Cardiac septum (tissue), 1 donor: ENCODE measurements at regions of chr18 and their contacts with region 1.

Region 1: DNA sequence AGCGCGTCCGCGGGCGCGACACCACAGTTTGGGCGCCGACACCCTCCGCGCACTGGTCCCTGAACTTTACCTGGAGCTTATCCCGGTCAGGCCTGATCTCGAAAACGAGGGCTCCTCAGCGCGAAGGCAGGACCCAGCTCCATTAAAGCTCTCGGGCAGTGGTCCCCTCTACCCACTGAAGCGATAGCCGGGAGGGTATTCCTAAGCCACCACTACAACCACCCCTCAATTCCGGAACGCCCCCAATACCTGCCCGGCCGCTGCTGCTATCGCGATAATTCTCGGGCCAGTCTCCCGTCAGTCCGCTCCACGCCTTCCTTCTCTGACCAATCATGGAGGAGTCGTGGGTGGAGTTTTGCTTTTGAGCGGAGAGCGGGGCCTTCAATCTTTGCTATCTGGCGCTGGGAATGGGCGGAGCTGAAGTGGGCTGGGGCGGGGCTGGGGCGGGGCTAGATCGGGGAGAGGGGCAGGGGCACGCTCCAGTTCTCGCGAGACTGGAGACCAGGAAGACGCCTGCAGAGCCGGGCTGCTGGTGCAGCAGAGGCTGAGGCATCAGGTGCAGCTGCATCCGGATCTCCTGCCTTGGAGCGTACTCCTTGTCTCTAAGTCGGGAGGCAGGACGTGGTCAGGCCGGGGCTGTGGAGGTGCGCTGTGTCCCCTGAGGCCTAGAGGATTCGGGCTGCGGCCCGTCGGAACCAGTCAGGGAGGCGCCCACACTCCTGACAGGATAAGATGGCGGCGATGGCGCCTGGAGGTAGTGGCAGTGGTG is at the starts of genes PIGN and RELCH:
- DNase-seq: peak; percentile 97
- total RNA-seq, gene PIGN: 24.8 TPM
- total RNA-seq, gene RELCH: 21.0 TPM

Region 2: DNA sequence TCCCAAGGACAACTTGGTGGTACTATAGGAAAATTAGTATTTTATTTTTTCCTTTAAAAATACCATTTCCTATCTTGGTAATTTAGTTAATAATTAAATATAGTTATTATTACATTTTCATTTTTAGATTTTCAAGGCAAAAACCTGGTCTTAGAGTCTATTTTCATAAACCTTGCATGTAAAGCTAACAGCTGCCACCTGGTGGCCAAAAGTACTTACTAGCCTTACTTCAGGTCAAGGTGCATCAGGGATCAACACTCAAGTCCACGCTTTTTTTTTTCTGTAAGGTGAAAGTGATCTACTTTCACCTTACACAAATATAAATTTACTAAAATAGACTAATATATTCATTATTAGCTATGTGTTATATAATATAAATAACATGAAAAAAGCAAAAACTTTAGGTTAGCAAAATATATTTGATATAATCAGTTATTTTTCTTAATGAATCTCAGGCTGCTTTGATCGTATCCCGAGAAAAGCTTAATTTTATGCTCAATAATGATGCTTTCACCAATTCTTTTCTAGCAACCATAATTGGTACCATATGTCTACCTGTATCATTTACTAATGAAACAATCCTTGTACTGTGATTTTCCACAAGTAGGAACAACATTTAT is 62.6 kb after region 1 on chr18:
- intact Hi-C with region 1: loop called (anchors 2 kb)
- DNase-seq: no peak

Region 3: DNA sequence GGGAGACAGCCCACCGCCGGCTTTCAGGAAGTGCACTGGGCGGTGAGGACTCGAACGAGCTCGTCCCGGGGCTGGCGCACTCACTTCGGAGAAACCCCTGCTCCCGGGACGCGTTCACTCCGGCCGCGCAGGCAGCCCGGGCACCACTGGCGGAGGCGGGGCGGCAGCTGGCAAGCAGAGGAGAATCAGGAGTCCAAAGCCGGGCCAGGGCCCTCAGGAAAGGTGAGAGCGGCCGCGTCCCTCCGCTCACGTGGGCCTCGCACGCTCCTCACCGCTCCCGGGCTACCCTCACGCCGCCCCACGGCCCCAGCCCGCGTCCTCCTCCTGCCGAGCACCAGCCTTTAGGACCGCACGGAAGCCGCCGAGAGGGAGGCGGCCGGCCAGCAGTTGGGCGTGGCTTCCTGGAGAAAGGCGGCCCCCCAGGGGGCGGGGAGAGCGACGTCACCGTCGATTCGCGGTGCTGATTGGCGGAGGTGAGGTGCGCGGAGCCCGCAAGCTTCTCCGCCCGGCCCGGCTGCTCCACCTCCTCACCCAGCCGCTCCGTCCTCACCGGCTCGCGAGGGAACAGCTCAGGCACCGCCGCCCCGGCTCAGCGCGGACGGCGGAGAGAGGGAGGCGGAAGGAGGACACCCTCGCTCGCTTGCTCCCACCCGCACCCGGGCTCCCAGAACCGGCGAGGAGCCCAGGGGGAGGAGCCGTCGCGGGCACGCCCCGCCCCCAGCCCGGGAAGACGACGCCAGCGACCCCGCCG is 335.7 kb after region 1 on chr18 and contains the start of gene ZCCHC2:
- intact Hi-C with region 1: loop called (anchors 10 kb)
- DNase-seq: peak; percentile 99
- total RNA-seq, gene ZCCHC2: 19.1 TPM

Region 4: DNA sequence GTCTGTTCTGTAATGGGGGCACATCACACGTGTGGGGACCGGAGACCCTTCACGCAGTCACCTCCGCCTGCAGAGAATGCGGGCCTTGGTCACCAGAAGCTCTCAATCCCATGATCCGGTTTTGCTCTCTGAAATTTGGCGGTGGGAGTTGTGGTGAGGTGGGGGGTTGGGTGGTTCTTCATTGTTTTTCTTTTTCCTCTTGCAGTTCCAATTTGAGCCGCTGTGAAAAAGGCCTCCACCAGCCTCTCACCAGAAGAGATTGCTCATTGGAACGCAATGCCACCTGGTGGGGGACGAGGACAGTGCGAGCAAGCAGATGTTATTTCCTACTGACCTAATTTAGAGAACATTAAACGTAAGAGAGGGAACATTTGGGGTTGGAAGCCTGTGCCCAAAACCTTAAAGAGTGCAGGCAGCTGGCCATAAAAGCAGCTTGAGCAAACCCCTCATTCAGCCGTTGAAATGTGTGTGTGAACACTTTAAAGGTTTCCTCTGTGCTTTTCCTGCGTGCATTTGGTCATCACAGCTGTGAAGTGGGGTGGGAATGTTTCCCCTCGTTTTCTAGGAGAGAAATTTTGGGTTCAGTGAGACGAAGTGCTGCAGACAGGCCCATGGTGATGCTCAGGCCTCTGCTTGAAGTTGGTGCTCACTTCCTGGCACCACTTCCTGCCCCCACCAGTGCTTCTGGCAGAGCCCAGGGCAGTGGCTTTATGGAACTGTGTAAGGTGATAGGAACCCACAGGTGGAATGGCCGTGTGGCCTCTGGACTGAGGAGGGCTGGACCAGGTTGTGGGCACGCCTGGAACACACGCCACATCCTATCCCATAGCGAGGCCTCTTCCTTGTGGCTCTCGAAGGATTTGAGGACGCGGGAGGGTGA is 397.5 kb after region 1 on chr18:
- intact Hi-C with region 1: loop called (anchors 10 kb)
- DNase-seq: peak; percentile 90